Activated B cell treated with CpG ODN at 0.5 μM for 24 hours (primary cell): ENCODE measurements at regions of chr6 and their contacts with region 1.

Region 1: DNA sequence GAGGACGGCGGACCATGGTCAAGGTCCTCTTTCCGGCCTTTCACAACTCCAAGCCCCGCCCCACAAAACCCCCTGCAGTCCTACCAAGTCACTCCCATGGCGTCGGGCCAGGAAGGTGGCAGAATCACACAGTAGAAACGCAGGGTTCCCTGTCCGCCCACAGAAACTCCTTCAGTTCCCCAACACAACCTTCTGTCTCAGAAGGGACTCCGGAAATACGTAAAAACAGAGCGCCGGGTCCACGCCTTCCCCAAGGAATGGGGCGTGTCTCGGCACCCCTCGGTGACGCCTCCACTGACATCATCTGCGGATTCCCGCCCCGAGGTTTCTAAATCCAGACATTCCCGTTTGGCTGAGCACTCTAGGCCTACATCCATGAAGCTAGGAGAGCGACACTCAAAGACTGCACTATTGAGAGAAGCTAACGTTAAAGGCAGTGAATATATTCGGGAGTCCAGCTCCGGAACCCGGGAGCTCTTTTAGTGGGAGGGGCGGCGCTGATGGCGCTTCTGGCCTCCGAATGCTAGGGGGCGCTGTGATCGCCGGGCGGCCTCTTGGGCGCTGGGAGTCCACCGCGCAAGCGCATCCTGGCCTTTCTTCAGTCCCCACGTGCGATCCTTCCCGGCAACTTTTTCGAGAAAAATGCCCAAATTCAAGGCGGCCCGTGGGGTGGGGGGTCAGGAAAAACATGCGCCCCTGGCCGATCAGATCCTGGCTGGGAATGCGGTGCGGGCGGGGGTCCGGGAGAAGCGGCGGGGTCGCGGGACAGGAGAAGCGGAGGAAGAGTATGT is at the starts of genes BYSL and MED20:
- DNase-seq: peak; percentile 95
- ATAC-seq: peak; percentile 91
- H3K4me3 Mint-ChIP-seq: peak within 1 kb of the TSS; percentile 98
- H3K27ac Mint-ChIP-seq: peak within 1 kb of the TSS; percentile 98
- H3K4me1 Mint-ChIP-seq: peaks cover 49% of the 10 kb centered on the region
- H3K27me3 Mint-ChIP-seq: no peaks in the 10 kb centered on the region
- CTCF ChIP-seq: peak; percentile 24
- total RNA-seq, gene BYSL: 39.5 and 43.2 TPM in 2 replicates
- total RNA-seq, gene MED20: 21.1 and 22.2 TPM in 2 replicates

Region 2: DNA sequence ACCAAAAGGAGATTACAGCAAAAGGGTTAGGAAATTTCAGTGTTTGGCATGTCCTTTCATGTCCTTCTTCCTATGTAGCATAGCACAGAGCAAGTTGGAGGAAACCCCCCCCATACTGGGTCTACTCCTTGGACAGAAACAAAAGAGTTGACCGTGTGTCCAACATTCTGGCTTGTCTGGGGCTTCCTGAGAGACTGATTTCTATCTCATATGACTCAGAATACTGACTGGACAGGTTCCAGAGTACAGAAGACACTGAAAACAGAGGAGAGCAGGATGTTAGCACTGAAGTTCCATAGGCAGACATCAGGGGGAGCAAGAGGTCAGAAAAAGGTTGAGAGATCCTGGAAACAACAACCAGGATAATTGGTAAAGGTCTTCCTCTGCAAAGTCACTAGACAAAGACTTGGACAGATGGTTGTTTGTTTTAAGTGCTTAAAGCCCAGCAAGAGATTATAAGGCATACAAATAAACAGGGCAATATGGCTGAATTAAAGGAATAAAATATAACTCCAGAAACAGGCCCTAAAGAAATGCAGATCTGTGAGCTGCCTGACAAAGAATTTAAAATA is 74.4 kb before region 1 on chr6:
- CTCF ChIA-PET with region 1: interaction called, 6 read pairs
- POLR2A ChIA-PET with region 1: interaction called, 3 read pairs
- intact Hi-C with region 1: loop called (anchors 1 kb)
- DNase-seq: no peak
- ATAC-seq: peak; percentile 72
- H3K4me3 Mint-ChIP-seq: no peak overlapping the region
- H3K27ac Mint-ChIP-seq: no peak overlapping the region
- H3K4me1 Mint-ChIP-seq: no peaks in the 10 kb centered on the region
- H3K27me3 Mint-ChIP-seq: no peaks in the 10 kb centered on the region
- CTCF ChIP-seq: no peak

Region 3: DNA sequence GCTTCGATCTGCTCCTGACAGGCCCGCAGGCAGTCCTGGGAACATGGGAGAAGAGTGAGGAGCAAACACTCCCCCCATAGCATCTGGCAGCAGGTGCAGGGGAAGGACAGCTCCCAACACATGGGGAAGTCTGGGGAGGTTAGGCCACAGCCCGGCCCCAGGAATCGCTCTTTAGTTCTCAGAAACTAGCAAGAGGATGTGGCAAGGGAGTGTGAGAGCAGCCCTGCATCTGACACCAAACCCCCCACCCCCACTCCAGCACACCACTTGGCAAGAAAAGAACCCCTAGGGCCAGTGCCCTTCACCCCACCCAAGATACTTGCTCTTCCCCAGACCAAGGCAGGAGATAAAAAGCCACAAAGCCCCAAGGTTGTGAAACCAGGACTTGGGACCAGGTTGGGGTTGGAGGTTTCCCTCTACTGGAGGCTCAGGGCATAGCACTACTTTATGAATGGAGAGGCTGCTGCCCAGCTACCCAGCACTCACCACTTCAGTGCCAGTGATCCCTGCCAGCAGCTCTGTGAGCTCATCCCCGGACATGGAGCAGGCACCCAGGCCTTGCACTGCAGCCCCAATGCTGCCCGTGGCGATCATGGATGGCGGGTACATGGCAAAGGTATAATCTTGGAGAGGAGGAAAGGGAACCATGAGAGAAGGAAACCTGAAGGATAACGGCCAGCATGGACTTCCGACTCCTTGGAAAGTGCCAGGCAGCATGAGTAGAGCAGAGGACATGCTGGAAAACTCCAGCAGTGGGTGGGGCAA is 15.1 kb after region 1 on chr6:
- CTCF ChIA-PET with region 1: interaction called, 14 read pairs
- POLR2A ChIA-PET with region 1: interaction called, 22 read pairs
- intact Hi-C with region 1: loop called (anchors 1 kb)
- DNase-seq: peak; percentile 38
- ATAC-seq: peak; percentile 69
- H3K4me3 Mint-ChIP-seq: peak overlapping the region; percentile 53
- H3K27ac Mint-ChIP-seq: peak overlapping the region; percentile 65
- H3K4me1 Mint-ChIP-seq: peaks cover 78% of the 10 kb centered on the region
- H3K27me3 Mint-ChIP-seq: no peaks in the 10 kb centered on the region
- CTCF ChIP-seq: peak; percentile 63

Region 4: DNA sequence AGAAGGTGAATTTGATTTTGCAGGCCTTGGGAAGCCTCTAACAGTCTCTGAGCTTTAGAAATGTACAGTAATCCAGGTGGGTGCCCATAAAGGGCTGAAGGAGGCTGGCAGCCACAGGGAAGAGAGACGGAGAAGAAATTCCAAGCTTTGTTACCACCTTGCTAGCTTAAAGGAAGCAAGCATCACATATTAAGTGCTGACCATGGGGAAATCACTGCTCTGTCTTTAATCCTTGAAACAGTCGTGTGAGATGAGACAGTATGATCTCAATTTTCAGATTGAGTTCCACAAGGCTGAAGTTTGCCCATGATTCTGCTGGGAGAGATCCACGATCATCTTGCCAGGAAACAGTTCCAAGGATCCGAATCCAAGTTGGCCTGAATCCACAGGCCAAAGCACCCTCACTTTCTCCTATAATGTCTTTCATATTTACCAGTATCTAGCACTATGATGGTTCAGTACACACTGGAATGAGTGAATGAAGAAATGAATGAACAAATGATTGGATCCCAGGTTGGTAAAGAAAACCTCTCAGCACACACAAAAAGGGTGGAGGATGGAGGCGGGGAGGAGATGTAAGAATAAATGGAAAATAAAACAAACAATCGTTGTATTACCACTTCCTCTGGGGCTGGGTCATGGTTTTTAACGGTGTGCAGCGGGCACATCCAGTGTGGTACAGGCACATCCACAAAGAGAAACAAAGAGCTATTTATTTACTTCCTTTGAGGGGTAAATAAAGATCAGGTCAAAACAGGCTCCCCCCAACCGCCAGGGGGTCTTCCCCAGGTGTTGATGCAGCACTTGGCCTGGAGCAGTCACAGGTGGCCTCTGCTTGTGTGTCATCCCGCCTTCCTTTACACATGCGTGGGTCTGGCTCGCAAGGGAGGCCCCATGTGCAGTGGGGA is 101.0 kb after region 1 on chr6:
- CTCF ChIA-PET with region 1: interaction called, 6 read pairs
- POLR2A ChIA-PET with region 1: interaction called, 12 read pairs
- intact Hi-C with region 1: no loop called
- DNase-seq: peak; percentile 58
- ATAC-seq: peak; percentile 38
- H3K4me3 Mint-ChIP-seq: peak overlapping the region; percentile 75
- H3K27ac Mint-ChIP-seq: peak overlapping the region; percentile 99
- H3K4me1 Mint-ChIP-seq: peaks cover 83% of the 10 kb centered on the region
- H3K27me3 Mint-ChIP-seq: no peaks in the 10 kb centered on the region
- CTCF ChIP-seq: no peak

Region 5: DNA sequence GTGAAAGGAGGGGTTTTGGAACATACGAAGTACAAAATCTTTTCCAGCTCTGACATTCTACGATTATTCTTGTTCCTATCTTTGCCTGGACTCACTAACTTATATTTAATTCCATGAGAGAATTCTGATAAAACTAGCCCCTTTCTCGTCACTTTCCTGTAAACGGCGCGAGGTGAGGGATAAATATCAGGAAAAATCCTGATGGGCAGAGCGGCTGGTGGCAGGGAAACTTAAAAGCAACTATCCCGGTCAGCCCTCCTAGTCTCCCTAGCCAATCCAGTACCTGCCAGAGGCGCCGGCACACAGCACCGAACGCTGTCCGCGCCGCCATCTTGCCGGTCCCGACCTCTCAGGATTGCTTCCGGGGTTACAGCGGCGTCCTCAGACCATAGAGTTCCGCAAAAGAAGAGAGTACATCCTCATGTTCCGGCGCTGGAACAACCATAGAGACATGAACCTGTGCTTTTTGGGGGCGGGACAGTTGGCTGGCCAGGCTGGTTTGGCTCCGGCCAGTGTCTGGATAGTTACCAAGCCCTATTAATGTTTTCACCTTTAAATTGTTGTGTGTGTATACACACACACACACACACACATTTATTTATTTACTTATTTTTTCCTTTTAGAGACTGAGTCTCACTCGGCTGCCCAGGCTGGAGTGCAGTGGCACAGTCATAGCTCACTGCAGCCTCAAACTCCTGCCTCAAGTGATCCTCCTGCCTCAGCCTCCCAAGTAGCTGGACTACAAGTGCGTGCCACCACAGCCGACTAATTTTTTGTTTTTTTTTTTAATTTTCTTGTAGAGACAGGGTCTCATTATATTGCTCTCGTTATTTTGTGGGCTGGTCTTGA is 296.6 kb after region 1 on chr6 and contains the start of gene MRPS10:
- CTCF ChIA-PET with region 1: interaction called, 5 read pairs
- POLR2A ChIA-PET with region 1: no interaction called
- intact Hi-C with region 1: loop called (anchors 1 kb)
- DNase-seq: peak; percentile 76
- ATAC-seq: peak; percentile 99
- H3K4me3 Mint-ChIP-seq: peak within 1 kb of the TSS; percentile 99
- H3K27ac Mint-ChIP-seq: peak within 1 kb of the TSS; percentile 95
- H3K4me1 Mint-ChIP-seq: peaks cover 30% of the 10 kb centered on the region
- H3K27me3 Mint-ChIP-seq: no peaks in the 10 kb centered on the region
- CTCF ChIP-seq: no peak
- total RNA-seq, gene MRPS10: 35.7 and 37.0 TPM in 2 replicates